Naive thymus-derived CD4-positive, alpha-beta T cell (primary cell): ENCODE measurements at regions of chr20 and their contacts with region 1.

Region 1: DNA sequence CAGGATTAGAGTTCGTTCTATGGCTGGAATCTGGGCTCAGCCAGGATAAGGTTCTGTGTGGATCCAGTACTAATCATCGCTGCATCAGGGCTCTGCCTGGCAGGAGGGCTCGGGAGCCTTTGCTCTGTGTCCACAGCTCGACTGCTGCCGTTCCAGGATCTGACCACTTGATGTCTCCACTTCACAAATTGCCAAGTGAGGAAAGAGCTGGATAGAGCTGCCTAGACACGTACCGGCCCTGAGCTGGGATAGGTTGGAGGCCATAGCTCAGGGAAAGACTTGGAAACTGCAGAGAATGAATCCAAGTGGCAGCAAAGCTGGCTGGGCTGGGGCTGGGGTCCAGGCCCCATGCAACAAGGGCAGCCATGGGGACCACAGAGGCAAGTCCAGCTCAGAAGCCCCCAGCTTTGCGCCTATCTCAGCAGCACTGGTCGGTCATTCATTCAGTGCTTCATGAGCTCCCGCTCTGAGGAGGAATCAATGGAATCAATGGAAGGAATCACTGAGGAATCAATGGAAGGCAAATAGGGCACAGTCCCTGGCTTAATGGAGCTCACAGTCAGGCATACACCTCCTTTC is 38.0 kb upstream of the TOP1 start:
- DNase-seq: peak; percentile 28 to 62 (median 52)
- ATAC-seq: peak; percentile 79
- H3K4me3 ChIP-seq: no peak overlapping the region
- H3K4me3 Mint-ChIP-seq: peak overlapping the region in 8 of 10 donors; percentile 14 to 68 (median 47)
- H3K27ac ChIP-seq: no peak overlapping the region
- H3K27ac Mint-ChIP-seq: peak overlapping the region in 8 of 9 donors; percentile 44 to 86 (median 75)
- H3K4me1 ChIP-seq: peaks cover 18 to 24% of the 10 kb centered on the region in 2 donors
- H3K4me1 Mint-ChIP-seq: peaks cover 25 to 38% (median 34%) of the 10 kb centered on the region in 7 donors
- H3K27me3 ChIP-seq: no peaks in the 10 kb centered on the region
- H3K27me3 Mint-ChIP-seq: no peaks in the 10 kb centered on the region

Region 2: GRCh38 chr20:40962730-40963504 is 27.7 kb before region 1 on chr20:
- CTCF ChIA-PET with region 1: interaction called, 31 read pairs
- POLR2A ChIA-PET with region 1: no interaction called
- intact Hi-C with region 1: loop called (anchors 1 kb)
- DNase-seq: peak; percentile 36 to 76 (median 64)
- ATAC-seq: peak; percentile 90
- H3K4me3 ChIP-seq: no peak overlapping the region
- H3K4me3 Mint-ChIP-seq: no peak overlapping the region
- H3K27ac ChIP-seq: no peak overlapping the region
- H3K27ac Mint-ChIP-seq: no peak overlapping the region
- H3K4me1 ChIP-seq: peaks cover 0 to 15% of the 10 kb centered on the region in 2 donors
- H3K4me1 Mint-ChIP-seq: peaks cover 0 to 11% (median 9%) of the 10 kb centered on the region in 7 donors
- H3K27me3 ChIP-seq: no peaks in the 10 kb centered on the region
- H3K27me3 Mint-ChIP-seq: peaks cover 0 to 5% (median 0%) of the 10 kb centered on the region in 5 donors

Region 3: DNA sequence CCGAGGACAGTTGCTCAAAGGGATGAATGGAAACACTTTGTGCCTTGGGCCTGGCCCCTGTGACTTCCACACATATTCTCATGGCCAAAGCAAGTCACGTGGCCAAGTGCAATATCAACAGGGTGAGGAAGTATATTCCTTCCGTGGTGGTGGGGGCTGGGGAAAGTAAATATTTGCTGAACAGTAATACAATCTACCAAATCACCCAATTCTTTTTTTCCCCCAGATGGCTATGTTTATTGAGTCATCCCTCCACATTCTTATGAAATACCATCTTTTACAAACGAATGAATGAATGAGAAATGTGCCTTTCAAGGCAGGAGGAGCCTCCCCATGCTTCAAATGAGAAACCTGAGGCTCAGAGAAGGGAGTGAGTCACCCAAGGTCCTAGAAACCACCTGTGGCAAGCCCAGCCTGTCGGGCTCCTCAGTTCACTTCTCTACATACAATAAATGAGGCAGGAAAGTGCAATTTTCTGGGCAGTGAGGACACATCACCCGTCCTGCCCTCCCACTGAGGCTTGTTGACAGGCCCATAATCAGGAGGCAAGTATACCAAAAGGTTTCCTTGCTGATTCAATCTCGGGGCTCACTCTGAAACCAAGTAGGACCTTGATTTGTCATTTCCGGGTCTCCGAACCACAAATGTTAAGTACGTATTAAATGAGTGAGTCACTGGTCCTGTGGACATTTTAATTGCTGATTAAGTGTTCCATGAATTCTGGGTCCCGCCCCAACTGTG is 12.7 kb after region 1 on chr20:
- CTCF ChIA-PET with region 1: interaction called, 10 read pairs
- POLR2A ChIA-PET with region 1: no interaction called
- intact Hi-C with region 1: loop called in 1 of 2 experiments (anchors 1 kb)
- DNase-seq: peak in 8 of 9 donors; percentile 15 to 73 (median 23)
- ATAC-seq: peak; percentile 85
- H3K4me3 ChIP-seq: peak overlapping the region; percentile 48
- H3K4me3 Mint-ChIP-seq: peak overlapping the region in 8 of 10 donors; percentile 39 to 77 (median 54)
- H3K27ac ChIP-seq: no peak overlapping the region
- H3K27ac Mint-ChIP-seq: peak overlapping the region; percentile 42 to 98 (median 68)
- H3K4me1 ChIP-seq: peaks cover 0 to 11% of the 10 kb centered on the region in 2 donors
- H3K4me1 Mint-ChIP-seq: peaks cover 8 to 41% (median 16%) of the 10 kb centered on the region in 7 donors
- H3K27me3 ChIP-seq: no peaks in the 10 kb centered on the region
- H3K27me3 Mint-ChIP-seq: no peaks in the 10 kb centered on the region

Region 4: GRCh38 chr20:41047975-41048305 is 57.3 kb after region 1 on chr20:
- CTCF ChIA-PET with region 1: interaction called, 6 read pairs
- POLR2A ChIA-PET with region 1: interaction called, 11 read pairs
- intact Hi-C with region 1: loop called (anchors 2 kb)
- DNase-seq: peak in 6 of 9 donors; percentile 23 to 40 (median 29)
- ATAC-seq: peak; percentile 77
- H3K4me3 ChIP-seq: peak overlapping the region; percentile 46
- H3K4me3 Mint-ChIP-seq: peak overlapping the region; percentile 70 to 93 (median 82)
- H3K27ac ChIP-seq: peak overlapping the region; percentile 62
- H3K27ac Mint-ChIP-seq: peak overlapping the region; percentile 74 to 94 (median 84)
- H3K4me1 ChIP-seq: peaks cover 46 to 59% of the 10 kb centered on the region in 2 donors
- H3K4me1 Mint-ChIP-seq: peaks cover 66 to 97% (median 90%) of the 10 kb centered on the region in 7 donors
- H3K27me3 ChIP-seq: no peaks in the 10 kb centered on the region
- H3K27me3 Mint-ChIP-seq: no peaks in the 10 kb centered on the region

Region 5: GRCh38 chr20:41078329-41078728 is 87.7 kb after region 1 on chr20:
- CTCF ChIA-PET with region 1: interaction called, 17 read pairs
- POLR2A ChIA-PET with region 1: no interaction called
- intact Hi-C with region 1: loop called (anchors 1 to 2 kb)
- DNase-seq: peak in 1 of 9 donors; percentile 16
- ATAC-seq: peak; percentile 45
- H3K4me3 ChIP-seq: no peak overlapping the region
- H3K4me3 Mint-ChIP-seq: peak overlapping the region in 6 of 10 donors; percentile 24 to 56 (median 49)
- H3K27ac ChIP-seq: no peak overlapping the region
- H3K27ac Mint-ChIP-seq: peak overlapping the region; percentile 24 to 76 (median 63)
- H3K4me1 ChIP-seq: peaks cover 4 to 40% of the 10 kb centered on the region in 2 donors
- H3K4me1 Mint-ChIP-seq: peaks cover 37 to 71% (median 66%) of the 10 kb centered on the region in 7 donors
- H3K27me3 ChIP-seq: no peaks in the 10 kb centered on the region
- H3K27me3 Mint-ChIP-seq: no peaks in the 10 kb centered on the region

Region 6: DNA sequence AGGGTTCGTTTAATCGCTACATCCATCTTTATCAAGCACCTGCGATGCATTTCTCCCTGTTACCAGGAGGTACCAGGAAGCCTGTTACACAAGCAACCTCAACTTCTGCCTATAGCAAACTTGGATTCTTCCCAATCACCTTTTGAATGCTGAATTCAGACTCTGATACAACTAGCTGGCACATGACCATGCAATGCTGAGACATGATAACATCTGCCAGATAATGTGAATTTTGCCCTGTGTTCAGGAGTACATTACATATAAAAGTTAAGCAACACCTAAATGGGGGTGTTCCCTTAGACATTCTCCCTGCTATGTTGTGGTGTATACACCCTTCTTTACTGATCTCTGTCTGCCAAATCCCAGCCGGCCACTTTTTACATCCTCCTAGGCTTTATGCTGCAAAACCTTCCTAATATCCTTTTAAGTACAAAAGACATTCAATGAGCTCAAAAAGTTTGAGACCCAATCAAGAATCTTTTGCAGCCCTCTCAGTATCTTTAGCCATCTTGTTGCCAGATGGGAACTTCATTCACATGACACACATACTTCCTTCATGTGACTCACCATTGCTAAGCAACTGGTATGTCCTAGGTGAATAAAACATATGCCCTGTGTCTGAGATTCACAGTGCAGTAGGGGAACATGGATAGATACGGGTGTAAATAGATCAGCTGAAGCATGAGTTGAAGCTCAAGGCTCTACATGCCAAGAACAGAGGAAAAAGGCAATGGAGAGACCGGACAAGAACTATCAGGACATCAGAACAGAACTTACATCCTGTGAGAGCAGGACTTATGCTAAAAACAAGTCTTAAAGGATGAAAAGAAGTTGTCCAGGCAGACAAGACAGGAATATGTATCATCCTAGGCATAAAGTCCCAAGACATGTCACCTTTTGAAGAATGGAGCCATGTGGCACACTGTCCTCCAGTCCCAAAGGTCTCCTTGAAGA is 242.6 kb after region 1 on chr20:
- CTCF ChIA-PET with region 1: interaction called, 4 read pairs
- POLR2A ChIA-PET with region 1: no interaction called
- intact Hi-C with region 1: loop called in 1 of 2 experiments (anchors 1 kb)
- DNase-seq: no peak
- ATAC-seq: no peak
- H3K4me3 ChIP-seq: no peak overlapping the region
- H3K4me3 Mint-ChIP-seq: peak overlapping the region in 5 of 10 donors; percentile 9 to 55 (median 15)
- H3K27ac ChIP-seq: no peak overlapping the region
- H3K27ac Mint-ChIP-seq: peak overlapping the region in 2 of 9 donors; percentile 1 to 28
- H3K4me1 ChIP-seq: peaks cover 0 to 7% of the 10 kb centered on the region in 2 donors
- H3K4me1 Mint-ChIP-seq: peaks cover 16 to 31% (median 20%) of the 10 kb centered on the region in 7 donors
- H3K27me3 ChIP-seq: no peaks in the 10 kb centered on the region
- H3K27me3 Mint-ChIP-seq: no peaks in the 10 kb centered on the region

Region 7: GRCh38 chr20:41704896-41705295 is 714.3 kb after region 1 on chr20:
- CTCF ChIA-PET with region 1: no interaction called
- POLR2A ChIA-PET with region 1: no interaction called
- intact Hi-C with region 1: no loop called
- DNase-seq: no peak
- ATAC-seq: no peak
- H3K4me3 ChIP-seq: no peak overlapping the region
- H3K4me3 Mint-ChIP-seq: no peak overlapping the region
- H3K27ac ChIP-seq: no peak overlapping the region
- H3K27ac Mint-ChIP-seq: no peak overlapping the region
- H3K4me1 ChIP-seq: no peaks in the 10 kb centered on the region
- H3K4me1 Mint-ChIP-seq: no peaks in the 10 kb centered on the region
- H3K27me3 ChIP-seq: no peaks in the 10 kb centered on the region
- H3K27me3 Mint-ChIP-seq: peaks cover 0 to 8% (median 6%) of the 10 kb centered on the region in 5 donors